PC-3 (cell line): ENCODE measurements at regions of chr19 and their contacts with region 1.

Region 1: GRCh38 chr19:39098365-39099269 is 14.4 kb downstream of the ACP7 start:
- DNase-seq: no peak
- ATAC-seq: no peak
- H3K4me3 ChIP-seq: no peak overlapping the region
- H3K27ac ChIP-seq: no peak overlapping the region
- H3K4me1 ChIP-seq: no peaks in the 10 kb centered on the region
- H3K27me3 ChIP-seq: no peaks in the 10 kb centered on the region
- CTCF ChIP-seq: no peak

Region 2: GRCh38 chr19:39057615-39058014 is 41.0 kb before region 1 on chr19:
- CTCF ChIA-PET with region 1: no interaction called
- POLR2A ChIA-PET with region 1: interaction called, 24 read pairs
- intact Hi-C with region 1: no loop called
- DNase-seq: no peak
- ATAC-seq: no peak
- H3K4me3 ChIP-seq: no peak overlapping the region
- H3K27ac ChIP-seq: no peak overlapping the region
- H3K4me1 ChIP-seq: no peaks in the 10 kb centered on the region
- H3K27me3 ChIP-seq: no peaks in the 10 kb centered on the region
- CTCF ChIP-seq: no peak